CD8-positive, alpha-beta T cell (primary cell): ENCODE measurements at regions of chr14 and their contacts with region 1.

Region 1: GRCh38 chr14:32076278-32077080 is 625 bp upstream of the ARHGAP5 start:
- DNase-seq: peak; percentile 47 to 90 (median 75)
- ATAC-seq: peak; percentile 61
- H3K4me3 ChIP-seq: peak overlapping the region; percentile 77 to 96
- H3K4me3 Mint-ChIP-seq: peak overlapping the region; percentile 100
- H3K27ac ChIP-seq: peak overlapping the region; percentile 69 to 74
- H3K27ac Mint-ChIP-seq: peak overlapping the region; percentile 95
- H3K4me1 ChIP-seq: peaks cover 13% of the 10 kb centered on the region
- H3K4me1 Mint-ChIP-seq: peaks cover 36% of the 10 kb centered on the region
- H3K27me3 ChIP-seq: no peaks in the 10 kb centered on the region
- H3K27me3 Mint-ChIP-seq: no peaks in the 10 kb centered on the region
- CTCF ChIP-seq: no peak

Region 2: DNA sequence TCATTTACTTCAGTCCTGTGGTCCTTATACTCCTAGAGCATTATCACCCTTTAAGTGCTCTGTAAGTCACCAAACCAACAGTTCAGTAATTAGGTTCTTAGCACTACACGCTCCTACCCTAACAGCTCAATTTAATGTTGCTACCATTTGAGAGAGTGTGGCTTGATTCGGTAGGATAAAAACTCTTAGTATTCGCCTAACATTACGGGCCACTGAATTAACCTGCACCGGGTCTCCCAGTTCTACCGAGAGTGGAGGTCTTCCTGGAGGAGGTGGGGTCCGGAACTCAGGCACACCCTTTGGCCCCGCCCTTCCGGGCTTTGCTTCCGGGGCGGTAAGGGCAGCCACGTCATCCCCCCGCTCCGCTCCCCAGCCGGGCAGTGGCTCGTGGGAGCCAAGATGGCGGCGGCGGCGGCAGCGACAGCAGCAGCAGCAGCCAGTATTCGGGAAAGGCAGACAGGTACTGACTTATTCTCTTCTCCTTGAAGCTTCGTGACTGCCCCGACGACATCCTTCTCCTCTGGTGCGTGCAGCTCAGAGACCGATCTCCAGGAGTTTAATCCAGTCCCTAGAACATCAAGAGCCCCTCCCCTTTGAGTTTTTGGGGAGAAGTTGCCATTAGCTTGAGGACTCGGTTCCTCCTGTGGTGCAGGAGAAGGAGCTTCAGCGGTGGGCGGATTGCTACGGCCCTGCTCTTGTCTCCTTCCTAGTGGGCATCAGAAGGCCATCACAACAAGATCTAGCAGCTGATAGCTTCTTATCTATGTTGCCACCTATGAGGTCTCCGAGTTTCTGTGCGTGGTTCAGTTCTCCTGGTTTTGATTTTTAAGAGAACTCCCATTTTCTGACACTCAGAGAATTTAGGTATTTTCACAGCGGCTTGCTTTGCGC is 1454.3 kb before region 1 on chr14 and contains the start of gene SCFD1:
- CTCF ChIA-PET with region 1: no interaction called
- POLR2A ChIA-PET with region 1: interaction called, 3 read pairs
- intact Hi-C with region 1: loop called in 1 of 2 experiments (anchors 5 kb)
- DNase-seq: peak; percentile 79 to 96 (median 92)
- ATAC-seq: peak; percentile 98
- H3K4me3 ChIP-seq: peak within 1 kb of the TSS; percentile 80 to 87
- H3K4me3 Mint-ChIP-seq: peak within 1 kb of the TSS; percentile 94
- H3K27ac ChIP-seq: peak within 1 kb of the TSS; percentile 85 to 88
- H3K27ac Mint-ChIP-seq: peak within 1 kb of the TSS; percentile 96
- H3K4me1 ChIP-seq: peaks cover 30% of the 10 kb centered on the region
- H3K4me1 Mint-ChIP-seq: peaks cover 51% of the 10 kb centered on the region
- H3K27me3 ChIP-seq: no peaks in the 10 kb centered on the region
- H3K27me3 Mint-ChIP-seq: no peaks in the 10 kb centered on the region
- CTCF ChIP-seq: no peak
- total RNA-seq, gene SCFD1: 66.5 to 71.5 TPM

Region 3: GRCh38 chr14:31420319-31421111 is 656.0 kb before region 1 on chr14 and contains the start of gene HEATR5A:
- CTCF ChIA-PET with region 1: no interaction called
- POLR2A ChIA-PET with region 1: no interaction called
- intact Hi-C with region 1: loop called in 1 of 2 experiments (anchors 2 kb)
- DNase-seq: peak; percentile 87 to 95 (median 93)
- ATAC-seq: peak; percentile 97
- H3K4me3 ChIP-seq: peak within 1 kb of the TSS; percentile 76 to 96
- H3K4me3 Mint-ChIP-seq: peak within 1 kb of the TSS; percentile 97
- H3K27ac ChIP-seq: peak within 1 kb of the TSS; percentile 63 to 71
- H3K27ac Mint-ChIP-seq: peak within 1 kb of the TSS; percentile 91
- H3K4me1 ChIP-seq: peaks cover 13% of the 10 kb centered on the region
- H3K4me1 Mint-ChIP-seq: peaks cover 25% of the 10 kb centered on the region
- H3K27me3 ChIP-seq: no peaks in the 10 kb centered on the region
- H3K27me3 Mint-ChIP-seq: no peaks in the 10 kb centered on the region
- CTCF ChIP-seq: no peak
- total RNA-seq, gene HEATR5A: 3.4 to 3.5 TPM

Region 4: GRCh38 chr14:31926123-31926522 is 150.4 kb before region 1 on chr14:
- CTCF ChIA-PET with region 1: interaction called, 8 read pairs
- POLR2A ChIA-PET with region 1: no interaction called
- intact Hi-C with region 1: loop called (anchors 1 to 5 kb)
- DNase-seq: peak in 3 of 9 experiments; percentile 21 to 59 (median 41)
- ATAC-seq: peak; percentile 48
- H3K4me3 ChIP-seq: no peak overlapping the region
- H3K4me3 Mint-ChIP-seq: no peak overlapping the region
- H3K27ac ChIP-seq: no peak overlapping the region
- H3K27ac Mint-ChIP-seq: no peak overlapping the region
- H3K4me1 ChIP-seq: no peaks in the 10 kb centered on the region
- H3K4me1 Mint-ChIP-seq: no peaks in the 10 kb centered on the region
- H3K27me3 ChIP-seq: no peaks in the 10 kb centered on the region
- H3K27me3 Mint-ChIP-seq: no peaks in the 10 kb centered on the region
- CTCF ChIP-seq: peak; percentile 57

Region 5: DNA sequence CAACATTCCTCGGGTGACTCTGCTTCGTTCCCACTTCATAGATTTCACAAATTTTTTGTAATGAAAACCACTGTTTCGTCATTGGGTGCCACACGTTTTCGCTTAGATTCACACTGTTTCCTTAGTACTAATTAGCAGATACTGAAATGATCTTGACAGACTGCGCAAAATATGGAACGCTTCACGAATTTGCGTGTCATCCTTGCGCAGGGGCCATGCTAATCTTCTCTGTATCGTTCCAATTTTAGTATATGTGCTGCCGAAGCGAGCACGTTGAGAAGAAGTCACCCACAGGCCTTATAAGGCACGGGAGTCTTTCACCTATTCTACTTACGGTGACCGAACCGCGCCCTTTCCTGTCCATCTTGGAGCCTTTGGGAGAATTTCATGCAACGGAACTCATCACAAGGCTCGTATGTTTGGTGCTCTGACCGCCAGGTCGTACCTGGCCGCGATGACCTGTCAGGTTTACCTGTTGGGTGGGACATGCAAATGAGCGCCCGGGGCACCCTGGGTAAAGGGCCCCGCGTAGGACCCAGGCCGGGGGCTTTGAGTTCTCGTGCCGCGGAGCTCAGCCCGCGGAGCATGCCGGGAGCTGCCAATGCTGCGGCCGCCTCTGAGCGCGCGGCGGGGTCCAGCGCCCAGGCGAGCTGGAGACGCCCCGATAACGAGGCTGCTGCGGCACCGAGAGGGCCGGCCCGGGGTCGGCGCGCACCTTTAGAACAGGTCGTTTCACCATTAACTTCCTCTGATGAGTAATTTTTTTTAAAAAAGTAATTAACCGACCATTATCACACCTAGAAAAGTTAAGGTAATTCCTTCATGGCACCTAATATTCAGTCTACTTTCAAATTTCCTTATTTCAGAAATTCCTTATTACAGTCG is 126.8 kb after region 1 on chr14 and contains the start of gene RNU6-8:
- CTCF ChIA-PET with region 1: interaction called, 4 read pairs
- POLR2A ChIA-PET with region 1: interaction called, 18 read pairs
- intact Hi-C with region 1: loop called (anchors 1 kb)
- DNase-seq: peak; percentile 66 to 92 (median 85)
- ATAC-seq: peak; percentile 80
- H3K4me3 ChIP-seq: peak within 1 kb of the TSS; percentile 87 to 92
- H3K4me3 Mint-ChIP-seq: peak within 1 kb of the TSS; percentile 90
- H3K27ac ChIP-seq: peak within 1 kb of the TSS; percentile 99 to 100
- H3K27ac Mint-ChIP-seq: peak within 1 kb of the TSS; percentile 100
- H3K4me1 ChIP-seq: peaks cover 20% of the 10 kb centered on the region
- H3K4me1 Mint-ChIP-seq: peaks cover 29% of the 10 kb centered on the region
- H3K27me3 ChIP-seq: no peaks in the 10 kb centered on the region
- H3K27me3 Mint-ChIP-seq: peaks cover 2% of the 10 kb centered on the region
- CTCF ChIP-seq: no peak
- total RNA-seq, gene RNU6-8: not detected

Region 6: DNA sequence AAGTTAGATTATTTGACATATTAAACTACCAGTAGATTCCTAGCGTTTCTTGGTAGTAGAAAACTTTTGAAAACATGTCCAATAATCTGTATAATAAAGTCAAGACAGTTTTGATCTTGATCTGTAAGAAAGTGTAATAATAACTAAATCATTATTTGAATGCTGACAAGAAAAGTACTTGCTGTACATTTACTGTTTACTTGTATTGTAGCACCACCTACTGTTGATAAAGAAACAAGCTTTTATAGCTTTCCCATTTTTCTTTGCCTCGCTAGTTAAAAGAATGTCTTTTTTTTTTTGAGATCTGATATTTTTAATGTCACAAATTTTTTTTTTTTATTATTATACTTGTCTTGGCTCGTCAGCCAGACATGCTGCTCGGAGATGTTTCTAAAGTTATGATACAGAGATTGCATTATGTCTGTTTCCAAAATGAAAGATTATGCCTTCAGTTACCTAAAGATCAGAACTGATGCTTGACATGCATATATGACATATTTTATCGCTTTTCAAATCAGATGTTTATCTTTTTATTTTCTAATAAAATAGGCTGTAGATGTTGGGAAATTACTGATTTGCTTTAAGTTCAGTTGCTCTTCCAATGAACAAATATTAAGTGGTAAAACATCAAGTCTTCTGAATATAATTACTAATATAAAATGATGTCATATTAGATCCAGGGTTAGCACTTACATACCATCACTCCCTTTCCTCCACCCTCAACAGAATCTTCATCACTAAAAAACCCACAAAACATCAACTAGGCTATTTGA is 393.1 kb after region 1 on chr14:
- CTCF ChIA-PET with region 1: no interaction called
- POLR2A ChIA-PET with region 1: no interaction called
- intact Hi-C with region 1: loop called in 1 of 2 experiments (anchors 5 kb)
- DNase-seq: peak in 2 of 9 experiments; percentile 4 to 25
- ATAC-seq: no peak
- H3K4me3 ChIP-seq: no peak overlapping the region
- H3K4me3 Mint-ChIP-seq: no peak overlapping the region
- H3K27ac ChIP-seq: no peak overlapping the region
- H3K27ac Mint-ChIP-seq: no peak overlapping the region
- H3K4me1 ChIP-seq: no peaks in the 10 kb centered on the region
- H3K4me1 Mint-ChIP-seq: no peaks in the 10 kb centered on the region
- H3K27me3 ChIP-seq: no peaks in the 10 kb centered on the region
- H3K27me3 Mint-ChIP-seq: peaks cover 5% of the 10 kb centered on the region
- CTCF ChIP-seq: no peak